RWPE1 (cell line): ENCODE measurements at regions of chr13 and their contacts with region 1.

Region 1: GRCh38 chr13:49996951-49997895 is at the start of gene TRIM13:
- DNase-seq: peak; percentile 67
- H3K27ac ChIP-seq: peak within 1 kb of the TSS; percentile 98
- CTCF ChIP-seq: peak; percentile 88

Region 2: GRCh38 chr13:49353908-49354307 is 643.3 kb before region 1 on chr13:
- CTCF ChIA-PET with region 1: interaction called, 10 read pairs
- POLR2A ChIA-PET with region 1: no interaction called
- DNase-seq: no peak
- H3K27ac ChIP-seq: no peak overlapping the region
- CTCF ChIP-seq: no peak

Region 3: GRCh38 chr13:49585220-49586157 is 411.7 kb before region 1 on chr13 and contains the start of gene RCBTB1:
- CTCF ChIA-PET with region 1: no interaction called
- POLR2A ChIA-PET with region 1: no interaction called
- DNase-seq: peak; percentile 84
- H3K27ac ChIP-seq: peak within 1 kb of the TSS; percentile 87
- CTCF ChIP-seq: no peak

Region 4: DNA sequence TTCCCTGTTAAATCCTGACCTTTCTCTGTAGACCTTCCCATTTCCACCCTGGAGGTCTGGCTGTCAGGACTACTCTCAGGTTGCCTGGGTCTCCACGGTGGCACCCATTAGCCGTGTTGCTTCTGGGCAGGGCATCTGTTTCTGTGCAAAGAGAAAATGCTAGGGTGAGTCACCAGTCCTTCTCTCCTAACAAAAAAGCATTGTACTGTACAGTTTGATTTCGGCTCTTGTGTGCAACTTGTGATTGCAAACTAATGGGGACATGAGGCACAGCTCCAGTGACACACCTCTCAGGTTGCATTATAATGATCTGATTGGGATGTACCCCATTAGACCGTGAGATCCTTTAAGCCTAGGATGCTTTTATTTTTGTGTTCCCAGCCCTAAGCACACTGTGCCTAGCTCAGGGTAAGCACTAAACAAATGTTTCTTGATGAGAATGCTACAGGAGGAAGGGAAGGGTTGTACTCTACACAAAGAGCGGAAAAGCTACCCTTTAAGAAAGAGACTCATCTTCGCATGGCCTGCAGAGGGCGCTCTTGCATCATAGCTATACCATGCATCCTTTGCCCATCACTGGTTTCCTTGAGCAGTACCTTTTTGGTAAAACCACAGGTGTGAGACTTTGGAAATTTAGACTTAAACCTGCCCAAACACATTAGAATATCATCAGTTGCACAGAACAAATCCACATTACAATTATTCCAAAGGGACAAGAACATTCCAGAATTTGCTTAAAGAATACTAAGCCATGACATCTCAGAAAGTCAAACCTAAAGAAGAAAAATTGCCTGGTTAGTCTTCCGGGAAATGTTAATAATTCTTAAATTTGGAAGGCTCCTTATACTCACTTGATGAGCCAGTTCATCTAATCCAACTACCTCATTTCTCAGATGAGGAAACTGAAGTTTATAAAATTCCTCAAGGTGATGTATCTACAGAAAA is 20.6 kb before region 1 on chr13:
- CTCF ChIA-PET with region 1: interaction called, 11 read pairs
- POLR2A ChIA-PET with region 1: interaction called, 3 read pairs
- DNase-seq: peak; percentile 60
- H3K27ac ChIP-seq: no peak overlapping the region
- CTCF ChIP-seq: peak; percentile 83

Region 5: DNA sequence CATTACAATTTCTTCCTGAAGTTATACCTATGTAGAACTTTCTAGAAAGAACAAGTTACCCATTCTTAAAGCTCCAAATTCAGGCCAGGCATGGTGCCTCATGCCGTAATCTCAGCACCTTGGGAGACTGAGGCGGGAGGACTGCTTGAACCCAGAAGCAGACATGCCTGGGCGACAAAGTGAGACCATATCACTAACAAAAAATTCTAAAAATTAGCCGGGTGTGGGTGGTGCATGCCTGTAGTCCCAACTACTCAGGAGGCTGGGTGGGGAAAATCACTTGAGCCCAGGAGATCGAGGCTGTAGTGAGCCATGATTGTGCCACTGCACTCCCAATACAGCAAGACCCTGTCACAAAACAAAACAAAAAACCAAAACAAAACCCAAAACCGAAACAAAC is 41.0 kb after region 1 on chr13:
- CTCF ChIA-PET with region 1: no interaction called
- POLR2A ChIA-PET with region 1: interaction called, 13 read pairs
- DNase-seq: no peak
- H3K27ac ChIP-seq: no peak overlapping the region
- CTCF ChIP-seq: no peak

Region 6: GRCh38 chr13:50167224-50167947 is 170.2 kb after region 1 on chr13:
- CTCF ChIA-PET with region 1: no interaction called
- POLR2A ChIA-PET with region 1: no interaction called
- DNase-seq: no peak
- H3K27ac ChIP-seq: no peak overlapping the region
- CTCF ChIP-seq: no peak

Region 7: DNA sequence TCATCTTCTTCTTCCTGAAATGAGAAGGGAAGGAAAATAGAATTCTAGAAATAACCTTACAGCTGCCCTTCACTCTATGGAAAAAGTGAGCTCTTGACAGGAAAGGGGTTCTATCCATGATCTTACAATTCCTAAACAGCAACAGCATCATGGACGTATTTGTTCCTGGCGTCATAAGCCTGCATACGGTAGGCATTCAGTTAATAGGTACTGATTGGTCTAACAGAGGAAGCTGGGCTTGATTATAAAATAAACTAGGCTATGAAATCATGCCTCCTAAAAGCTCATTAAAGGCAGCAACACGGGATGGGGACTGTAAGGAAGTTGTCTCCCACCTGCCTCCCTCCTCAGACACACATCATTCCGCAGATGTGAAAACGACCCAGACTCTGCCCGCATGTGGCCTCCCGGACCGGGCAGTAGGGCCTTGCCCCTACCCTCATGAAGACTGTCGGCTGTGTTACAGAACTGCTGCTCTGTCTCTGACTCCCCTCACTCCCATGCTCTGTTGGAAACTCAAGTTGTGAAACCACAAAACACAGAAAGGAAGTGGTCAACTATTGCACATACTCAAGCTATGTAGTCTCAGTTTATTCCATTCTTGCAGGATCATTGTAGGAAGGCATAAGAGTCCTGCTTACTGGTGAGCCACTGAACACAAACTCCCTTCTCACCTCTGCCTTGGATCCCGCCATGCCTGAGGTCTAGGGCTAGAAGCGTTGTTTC is 716.5 kb after region 1 on chr13:
- CTCF ChIA-PET with region 1: no interaction called
- POLR2A ChIA-PET with region 1: no interaction called
- DNase-seq: no peak
- H3K27ac ChIP-seq: no peak overlapping the region
- CTCF ChIP-seq: no peak

Region 8: GRCh38 chr13:51416107-51416506 is 1418.9 kb after region 1 on chr13:
- CTCF ChIA-PET with region 1: no interaction called
- POLR2A ChIA-PET with region 1: no interaction called
- DNase-seq: no peak
- H3K27ac ChIP-seq: no peak overlapping the region
- CTCF ChIP-seq: no peak